Naive thymus-derived CD4-positive, alpha-beta T cell (primary cell): ENCODE measurements at regions of chr2 and their contacts with region 1.

Region 1: DNA sequence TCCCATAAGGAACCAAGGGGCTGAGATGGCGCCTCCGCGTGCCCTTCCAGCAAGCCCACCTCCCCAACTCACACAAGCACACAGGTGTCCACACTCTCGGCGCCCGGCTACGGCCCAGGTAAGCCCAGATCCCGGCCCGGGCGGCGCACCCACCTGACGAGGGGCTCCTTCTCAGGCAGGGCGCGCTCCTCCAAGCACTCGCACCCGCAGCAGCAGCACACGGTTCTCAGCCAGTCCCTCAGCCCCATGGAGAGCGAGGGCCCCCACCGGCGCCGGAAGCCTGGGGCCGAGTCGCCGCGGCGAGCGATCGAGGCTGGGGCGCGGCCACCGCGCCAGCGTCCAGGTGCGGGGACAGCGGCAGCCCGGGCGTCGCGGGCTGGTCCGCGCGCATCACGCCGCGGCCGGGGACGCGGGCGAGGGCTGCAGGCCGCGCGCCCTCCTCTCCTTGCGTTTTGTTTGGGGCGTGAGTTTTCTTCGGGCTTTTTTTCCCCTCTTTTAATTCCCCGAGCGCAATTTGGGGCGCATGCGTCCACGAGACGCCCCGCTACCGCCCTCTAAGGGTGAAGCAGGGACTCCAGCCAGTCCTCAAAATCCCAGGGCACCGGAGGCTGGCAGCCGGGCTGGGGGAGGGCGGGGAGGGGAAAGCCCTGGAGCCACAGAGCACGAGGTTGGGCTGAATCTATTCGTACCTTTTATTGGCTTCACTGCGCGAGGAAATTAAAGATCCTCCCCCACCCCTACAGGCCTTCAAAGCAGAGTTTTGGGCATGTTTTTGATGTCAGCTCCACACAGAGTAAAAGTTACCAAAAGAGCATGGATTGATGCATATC is at the start of gene MREG:
- DNase-seq: peak; percentile 67 to 84 (median 80)
- ATAC-seq: peak; percentile 90
- H3K4me3 ChIP-seq: peak within 1 kb of the TSS; percentile 65
- H3K4me3 Mint-ChIP-seq: peak within 1 kb of the TSS; percentile 82 to 93 (median 89)
- H3K27ac ChIP-seq: peak within 1 kb of the TSS; percentile 59
- H3K27ac Mint-ChIP-seq: peak within 1 kb of the TSS; percentile 33 to 91 (median 74)
- H3K4me1 ChIP-seq: peaks cover 30 to 31% of the 10 kb centered on the region in 2 donors
- H3K4me1 Mint-ChIP-seq: peaks cover 27 to 70% (median 53%) of the 10 kb centered on the region in 7 donors
- H3K27me3 ChIP-seq: no peaks in the 10 kb centered on the region
- H3K27me3 Mint-ChIP-seq: peaks cover 0 to 4% (median 0%) of the 10 kb centered on the region in 5 donors
- total RNA-seq, gene MREG: 4.8 to 8.5 (median 6.4) TPM

Region 2: DNA sequence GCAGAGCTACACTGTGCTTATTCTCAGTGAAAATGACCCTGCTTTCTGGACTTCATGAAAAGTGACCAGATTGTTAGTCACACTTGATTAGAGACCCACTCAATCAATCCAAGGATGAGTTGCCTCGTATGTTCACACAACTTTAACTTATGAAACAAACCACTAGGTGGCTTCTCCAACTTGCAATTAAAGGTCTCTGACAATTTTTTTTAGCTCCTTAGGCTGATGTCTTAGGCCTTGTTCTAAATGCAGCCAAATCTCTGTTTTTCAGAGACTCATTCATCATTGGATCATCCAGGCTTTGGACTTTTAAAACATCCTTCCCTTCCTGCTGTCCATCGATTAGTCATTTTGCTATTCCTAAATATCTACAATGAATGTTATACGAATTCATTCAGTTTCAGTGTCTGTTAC is 63.3 kb before region 1 on chr2:
- CTCF ChIA-PET with region 1: interaction called, 3 read pairs
- POLR2A ChIA-PET with region 1: no interaction called
- intact Hi-C with region 1: loop called in 1 of 2 experiments (anchors 2 kb)
- DNase-seq: peak in 6 of 9 donors; percentile 4 to 47 (median 26)
- ATAC-seq: peak; percentile 42
- H3K4me3 ChIP-seq: no peak overlapping the region
- H3K4me3 Mint-ChIP-seq: no peak overlapping the region
- H3K27ac ChIP-seq: no peak overlapping the region
- H3K27ac Mint-ChIP-seq: no peak overlapping the region
- H3K4me1 ChIP-seq: no peaks in the 10 kb centered on the region
- H3K4me1 Mint-ChIP-seq: peaks cover 0 to 5% (median 0%) of the 10 kb centered on the region in 7 donors
- H3K27me3 ChIP-seq: no peaks in the 10 kb centered on the region
- H3K27me3 Mint-ChIP-seq: no peaks in the 10 kb centered on the region

Region 3: DNA sequence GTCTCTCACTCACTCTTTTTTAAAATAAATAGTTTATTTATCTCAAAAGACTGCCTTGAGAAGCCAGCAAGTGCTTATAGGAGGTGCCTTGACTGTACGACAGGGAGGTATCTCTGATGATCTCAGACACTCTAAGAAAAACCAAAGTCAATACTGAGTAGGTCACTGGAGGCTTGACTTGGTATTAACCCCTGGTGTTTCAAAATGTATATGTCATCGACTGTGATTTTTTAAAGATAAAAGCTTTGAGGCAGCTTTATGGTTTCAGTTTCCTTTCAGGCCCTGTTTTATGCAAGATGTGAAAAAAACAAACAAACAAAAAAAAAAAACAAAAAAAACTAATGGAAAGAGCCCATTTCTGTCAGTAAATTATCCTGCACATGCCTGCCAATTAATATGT is 33.6 kb before region 1 on chr2:
- CTCF ChIA-PET with region 1: interaction called, 3 read pairs
- POLR2A ChIA-PET with region 1: no interaction called
- intact Hi-C with region 1: loop called in 1 of 2 experiments (anchors 1 kb)
- DNase-seq: no peak
- ATAC-seq: peak; percentile 49
- H3K4me3 ChIP-seq: no peak overlapping the region
- H3K4me3 Mint-ChIP-seq: peak overlapping the region in 1 of 10 donors; percentile 12
- H3K27ac ChIP-seq: no peak overlapping the region
- H3K27ac Mint-ChIP-seq: peak overlapping the region in 1 of 9 donors; percentile 66
- H3K4me1 ChIP-seq: peaks cover 0 to 8% of the 10 kb centered on the region in 2 donors
- H3K4me1 Mint-ChIP-seq: peaks cover 0 to 37% (median 8%) of the 10 kb centered on the region in 7 donors
- H3K27me3 ChIP-seq: no peaks in the 10 kb centered on the region
- H3K27me3 Mint-ChIP-seq: no peaks in the 10 kb centered on the region

Region 4: DNA sequence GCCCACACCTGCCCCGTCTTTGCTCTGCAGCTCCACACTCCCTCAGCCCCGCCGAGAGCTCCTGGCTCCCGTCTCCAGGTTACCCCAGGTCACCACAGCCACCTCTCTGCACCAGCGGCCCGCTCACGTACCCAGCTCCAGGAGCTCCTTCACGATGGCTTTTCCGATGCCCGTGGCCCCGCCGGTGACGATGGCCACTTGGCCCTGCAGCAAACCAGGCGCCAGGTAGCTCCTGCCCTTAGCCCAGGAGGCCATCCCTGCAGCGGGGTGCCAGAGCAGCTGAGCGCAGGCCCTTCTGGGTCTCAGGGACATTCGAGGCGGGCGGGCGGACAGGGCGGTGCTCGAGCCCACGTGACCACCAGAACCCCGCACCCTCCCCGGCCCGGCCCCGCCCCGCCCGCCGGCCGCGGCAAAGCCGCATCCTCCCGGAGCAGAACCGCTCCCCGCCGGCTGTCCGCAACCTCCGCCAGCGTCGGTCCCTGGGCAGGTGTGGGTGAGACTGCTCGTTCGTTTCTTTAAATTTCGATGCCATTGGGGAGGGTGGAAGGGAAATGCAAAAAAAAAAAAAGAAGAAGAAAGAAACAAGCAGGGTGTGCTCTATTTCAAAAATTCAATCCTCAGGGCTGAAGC is 68.3 kb after region 1 on chr2 and contains the starts of genes PECR and TMEM169:
- CTCF ChIA-PET with region 1: no interaction called
- POLR2A ChIA-PET with region 1: no interaction called
- intact Hi-C with region 1: loop called in 1 of 2 experiments (anchors 2 kb)
- DNase-seq: peak; percentile 39 to 81 (median 62)
- ATAC-seq: peak; percentile 93
- H3K4me3 ChIP-seq: peak within 1 kb of the TSS; percentile 95
- H3K4me3 Mint-ChIP-seq: peak within 1 kb of the TSS; percentile 76 to 97 (median 94)
- H3K27ac ChIP-seq: peak within 1 kb of the TSS; percentile 77
- H3K27ac Mint-ChIP-seq: peak within 1 kb of the TSS; percentile 86 to 97 (median 95)
- H3K4me1 ChIP-seq: peaks cover 42 to 57% of the 10 kb centered on the region in 2 donors
- H3K4me1 Mint-ChIP-seq: peaks cover 47 to 76% (median 62%) of the 10 kb centered on the region in 7 donors
- H3K27me3 ChIP-seq: no peaks in the 10 kb centered on the region
- H3K27me3 Mint-ChIP-seq: no peaks in the 10 kb centered on the region
- total RNA-seq, gene PECR: 15.7 to 29.9 (median 20.6) TPM
- total RNA-seq, gene TMEM169: 2.0 to 5.1 (median 2.6) TPM